Mucosa of descending colon (tissue), 3 donors: ENCODE measurements at regions of chr14 and their contacts with region 1.

Region 1: DNA sequence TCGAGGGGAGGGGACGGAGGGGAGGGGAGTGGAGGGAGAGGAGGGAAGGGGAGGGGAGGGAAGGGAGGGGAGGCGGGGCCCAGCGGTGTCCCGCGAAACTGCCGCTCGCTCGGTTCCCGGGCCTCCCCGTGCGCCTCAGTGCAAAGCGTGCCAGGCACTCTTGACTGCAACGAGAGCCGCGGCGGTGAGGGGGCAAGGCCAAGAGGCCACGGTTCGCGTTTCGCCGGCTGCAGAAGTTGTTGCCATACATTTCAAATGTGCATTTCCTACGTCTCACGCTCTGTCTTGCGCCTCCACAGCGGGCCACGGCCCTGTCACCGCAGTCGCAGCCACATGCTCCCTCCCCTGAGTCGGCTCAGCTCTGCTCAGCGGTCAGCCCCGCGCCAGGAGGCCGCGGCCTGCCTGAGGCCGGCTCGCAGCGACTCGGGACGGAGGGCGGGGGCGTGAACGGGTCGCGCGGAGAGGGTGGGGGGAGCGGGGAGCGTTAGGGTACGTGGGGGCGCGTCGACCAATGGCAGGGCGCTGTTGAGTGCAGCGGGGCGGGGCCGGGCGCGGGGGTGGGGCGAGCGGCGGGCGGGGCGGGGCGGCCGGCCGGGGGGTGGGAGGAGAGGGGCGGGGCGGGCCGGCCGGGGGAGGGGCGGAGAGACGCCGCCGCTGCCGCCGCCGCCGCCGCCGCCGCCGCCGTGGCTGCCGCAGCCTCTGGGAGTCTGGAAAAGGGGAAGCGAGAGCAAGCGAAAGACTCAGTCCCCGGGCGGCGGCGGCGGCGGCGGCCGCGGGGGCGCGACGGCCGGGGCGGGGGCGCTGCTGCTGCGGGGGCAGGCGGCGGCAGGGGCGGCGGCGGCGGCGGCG is at the start of gene PPP2R5C:
- DNase-seq: peak; percentile 92 to 96 (median 94)
- ATAC-seq: peak; percentile 81
- H3K4me3 ChIP-seq: peak within 1 kb of the TSS; percentile 59
- H3K4me1 ChIP-seq: peaks cover 9% of the 10 kb centered on the region
- CTCF ChIP-seq: no peak
- total RNA-seq, gene PPP2R5C: 131 to 173 (median 160) TPM

Region 2: DNA sequence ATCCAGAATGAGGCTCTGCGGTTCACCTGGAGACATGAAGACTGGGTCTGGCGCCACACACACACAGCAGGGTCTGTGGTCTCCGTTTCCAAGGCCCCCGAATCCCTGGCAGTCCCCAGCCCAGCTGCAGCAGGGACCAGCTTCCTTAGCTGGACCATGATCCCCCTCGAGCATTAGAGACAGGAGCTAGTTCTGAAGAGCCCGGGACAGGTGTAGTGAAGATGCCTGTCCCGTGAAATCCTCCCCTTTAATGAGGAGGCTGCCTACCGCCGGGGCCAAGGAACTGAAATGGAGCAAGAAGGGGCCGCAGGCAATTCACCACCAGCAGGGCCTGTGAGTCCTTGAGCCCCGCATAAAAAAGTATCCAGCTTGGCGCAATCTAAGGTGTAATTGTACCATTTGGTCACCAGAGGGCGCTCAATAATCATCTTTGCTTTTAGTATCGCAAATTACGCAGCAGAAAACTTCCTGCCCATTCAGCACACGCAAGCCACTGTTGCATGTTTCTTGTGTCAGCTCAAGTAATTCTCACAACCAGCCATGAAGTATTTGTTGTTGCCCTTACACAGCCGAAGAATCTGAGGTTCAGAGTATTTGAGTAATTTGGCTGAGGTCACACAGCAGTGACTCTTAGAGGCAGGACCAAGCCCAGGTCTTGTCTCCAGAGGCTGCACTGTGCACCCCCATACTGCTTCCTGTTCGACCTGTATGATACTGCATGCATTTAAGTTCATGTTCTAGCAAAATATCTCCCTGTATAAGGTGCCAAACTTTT is 54.0 kb before region 1 on chr14:
- intact Hi-C with region 1: loop called in 1 of 2 experiments (anchors 2 kb)
- DNase-seq: peak in 2 of 3 donors; percentile 53 to 63
- ATAC-seq: peak; percentile 77
- H3K4me3 ChIP-seq: no peak overlapping the region
- H3K4me1 ChIP-seq: peaks cover 13% of the 10 kb centered on the region
- CTCF ChIP-seq: peak; percentile 62

Region 3: DNA sequence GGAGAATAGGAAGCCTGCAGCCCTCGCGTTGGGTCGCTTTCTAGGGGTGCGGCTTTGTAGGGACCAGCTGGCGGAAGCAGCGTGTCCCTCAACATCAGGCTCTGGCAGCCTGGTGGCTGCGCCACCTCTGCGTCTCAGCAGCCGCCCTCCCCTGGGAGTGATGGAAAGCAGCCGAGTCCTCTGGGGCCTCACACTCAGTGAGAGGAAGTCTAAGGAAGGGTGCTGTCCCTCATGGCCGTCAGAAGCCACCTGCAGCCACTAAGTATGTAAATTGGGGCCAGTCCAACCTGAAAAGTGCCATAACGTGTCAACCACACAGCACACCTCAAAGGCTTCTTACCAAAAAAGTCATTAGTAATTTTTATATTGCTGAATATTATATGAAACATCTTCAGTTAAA is 458.8 kb after region 1 on chr14:
- intact Hi-C with region 1: no loop called
- DNase-seq: no peak
- ATAC-seq: peak; percentile 39
- H3K4me3 ChIP-seq: no peak overlapping the region
- H3K4me1 ChIP-seq: peaks cover 4% of the 10 kb centered on the region
- CTCF ChIP-seq: no peak